MCF 10A (cell line): ENCODE measurements at regions of chr6 and their contacts with region 1.

Region 1: DNA sequence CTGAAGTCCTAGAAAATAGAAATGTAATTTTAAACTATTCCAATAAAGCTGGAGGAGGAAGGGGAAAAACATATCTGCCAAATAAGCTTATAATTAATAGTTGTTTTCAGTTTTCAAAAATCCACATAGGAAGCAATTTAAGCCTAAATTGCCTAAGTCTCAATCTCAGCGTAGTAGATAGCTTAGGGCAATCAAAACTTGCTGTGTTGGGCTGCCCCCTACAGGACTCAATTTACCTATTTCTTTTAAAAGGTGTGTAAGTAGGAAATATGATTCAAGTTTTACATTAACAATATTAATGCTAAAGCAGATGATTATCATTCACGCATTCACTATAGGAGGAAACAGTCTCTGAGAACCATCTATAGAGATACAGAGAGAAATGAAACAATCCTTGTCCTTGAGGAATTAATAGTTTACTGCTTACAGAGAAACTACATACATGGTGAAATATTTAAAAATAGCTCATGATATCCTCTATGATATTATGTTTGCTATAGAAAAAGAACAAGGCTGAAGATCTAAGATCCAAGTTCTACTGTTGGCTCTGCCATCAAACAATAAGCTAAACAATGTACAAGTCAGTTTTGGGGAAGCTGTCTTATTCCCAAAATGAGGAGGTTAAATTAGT is 102.1 kb downstream of the ATG5 start:
- DNase-seq: peak; percentile 78
- H3K4me3 Mint-ChIP-seq: no peak overlapping the region
- H3K27ac Mint-ChIP-seq: no peak overlapping the region
- H3K4me1 Mint-ChIP-seq: peaks cover 4% of the 10 kb centered on the region
- H3K27me3 Mint-ChIP-seq: no peaks in the 10 kb centered on the region
- CTCF ChIP-seq: peak; percentile 62

Region 2: GRCh38 chr6:105431226-105431625 is 792.2 kb before region 1 on chr6:
- CTCF ChIA-PET with region 1: interaction called, 24 read pairs
- POLR2A ChIA-PET with region 1: interaction called, 6 read pairs
- intact Hi-C with region 1: loop called (anchors 1 kb)
- DNase-seq: peak; percentile 70
- H3K4me3 Mint-ChIP-seq: no peak overlapping the region
- H3K27ac Mint-ChIP-seq: no peak overlapping the region
- H3K4me1 Mint-ChIP-seq: peaks cover 26% of the 10 kb centered on the region
- H3K27me3 Mint-ChIP-seq: no peaks in the 10 kb centered on the region
- CTCF ChIP-seq: peak; percentile 57

Region 3: DNA sequence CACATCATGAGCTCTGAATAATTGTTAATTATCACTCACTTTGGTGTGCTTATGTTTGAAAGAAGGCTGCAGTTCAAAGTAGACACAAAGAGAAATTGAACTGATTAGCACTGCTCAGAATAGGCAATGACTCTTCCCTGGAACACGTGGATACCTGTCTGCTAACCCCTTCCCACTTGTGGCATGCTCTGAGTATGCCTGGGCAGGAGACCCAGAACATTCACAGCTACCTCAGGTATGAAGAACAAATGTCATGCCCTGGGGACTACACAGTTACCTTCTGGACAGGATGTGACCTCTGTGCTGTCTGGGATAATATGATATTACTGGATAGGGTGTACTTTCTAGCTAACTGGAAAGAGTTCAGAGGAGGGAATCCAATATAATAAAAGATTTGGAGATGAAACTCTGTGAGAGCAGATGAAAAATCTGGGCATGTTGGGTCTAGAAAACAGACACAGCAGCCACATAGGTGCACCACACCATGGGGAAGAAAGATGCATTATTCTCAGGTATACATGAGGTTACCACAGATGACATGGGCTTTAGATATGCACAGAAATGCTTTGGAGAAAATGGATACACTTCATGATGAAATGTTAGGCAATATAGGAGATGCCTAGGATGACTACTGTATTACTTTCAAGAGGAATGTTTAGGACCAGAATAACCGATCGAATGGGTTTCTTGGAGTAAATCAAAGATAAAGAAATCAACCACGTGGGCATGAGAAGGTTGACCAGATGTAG is 496.3 kb before region 1 on chr6:
- CTCF ChIA-PET with region 1: interaction called, 13 read pairs
- POLR2A ChIA-PET with region 1: no interaction called
- intact Hi-C with region 1: loop called (anchors 5 kb)
- DNase-seq: no peak
- H3K4me3 Mint-ChIP-seq: no peak overlapping the region
- H3K27ac Mint-ChIP-seq: no peak overlapping the region
- H3K4me1 Mint-ChIP-seq: peaks cover 13% of the 10 kb centered on the region
- H3K27me3 Mint-ChIP-seq: no peaks in the 10 kb centered on the region
- CTCF ChIP-seq: no peak

Region 4: GRCh38 chr6:105992315-105992961 is 231.0 kb before region 1 on chr6:
- CTCF ChIA-PET with region 1: interaction called, 12 read pairs
- POLR2A ChIA-PET with region 1: no interaction called
- intact Hi-C with region 1: no loop called
- DNase-seq: peak; percentile 79
- H3K4me3 Mint-ChIP-seq: peak overlapping the region; percentile 85
- H3K27ac Mint-ChIP-seq: no peak overlapping the region
- H3K4me1 Mint-ChIP-seq: peaks cover 34% of the 10 kb centered on the region
- H3K27me3 Mint-ChIP-seq: no peaks in the 10 kb centered on the region
- CTCF ChIP-seq: no peak

Region 5: DNA sequence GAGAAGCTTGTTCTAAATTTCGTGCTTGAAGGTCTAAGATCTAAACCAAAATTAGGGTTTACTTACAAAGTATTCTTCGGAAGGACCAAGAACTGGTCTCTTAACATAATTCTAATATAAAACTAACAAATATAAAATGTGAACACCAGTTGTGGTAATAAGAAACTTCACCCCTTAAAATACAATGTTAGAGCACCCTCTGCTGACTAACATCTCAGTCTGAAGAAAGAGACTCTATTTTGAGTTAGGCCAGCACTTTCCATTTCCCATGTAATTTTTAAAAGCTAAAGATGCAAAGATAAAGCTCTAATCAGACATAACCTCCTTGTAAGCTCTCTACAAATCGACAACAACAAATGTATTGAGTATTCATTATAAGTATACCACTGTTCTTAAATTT is 77.5 kb after region 1 on chr6:
- CTCF ChIA-PET with region 1: interaction called, 5 read pairs
- POLR2A ChIA-PET with region 1: no interaction called
- intact Hi-C with region 1: loop called (anchors 2 kb)
- DNase-seq: peak; percentile 62
- H3K4me3 Mint-ChIP-seq: no peak overlapping the region
- H3K27ac Mint-ChIP-seq: no peak overlapping the region
- H3K4me1 Mint-ChIP-seq: no peaks in the 10 kb centered on the region
- H3K27me3 Mint-ChIP-seq: no peaks in the 10 kb centered on the region
- CTCF ChIP-seq: peak; percentile 50